GM23248 (cell line): ENCODE measurements at regions of chr16 and their contacts with region 1.

Region 1: GRCh38 chr16:18983565-18984424 is at the start of gene TMC7:
- DNase-seq: peak; percentile 93
- H3K4me3 ChIP-seq: peak within 1 kb of the TSS; percentile 77
- H3K27ac ChIP-seq: no peak within 1 kb of the TSS
- H3K4me1 ChIP-seq: peaks cover 5% of the 10 kb centered on the region; the same call in 1 of the 2 replicates
- H3K27me3 ChIP-seq: no peaks in the 10 kb centered on the region
- total RNA-seq, gene TMC7: 0.25 and 0.54 TPM in 2 replicates

Region 2: DNA sequence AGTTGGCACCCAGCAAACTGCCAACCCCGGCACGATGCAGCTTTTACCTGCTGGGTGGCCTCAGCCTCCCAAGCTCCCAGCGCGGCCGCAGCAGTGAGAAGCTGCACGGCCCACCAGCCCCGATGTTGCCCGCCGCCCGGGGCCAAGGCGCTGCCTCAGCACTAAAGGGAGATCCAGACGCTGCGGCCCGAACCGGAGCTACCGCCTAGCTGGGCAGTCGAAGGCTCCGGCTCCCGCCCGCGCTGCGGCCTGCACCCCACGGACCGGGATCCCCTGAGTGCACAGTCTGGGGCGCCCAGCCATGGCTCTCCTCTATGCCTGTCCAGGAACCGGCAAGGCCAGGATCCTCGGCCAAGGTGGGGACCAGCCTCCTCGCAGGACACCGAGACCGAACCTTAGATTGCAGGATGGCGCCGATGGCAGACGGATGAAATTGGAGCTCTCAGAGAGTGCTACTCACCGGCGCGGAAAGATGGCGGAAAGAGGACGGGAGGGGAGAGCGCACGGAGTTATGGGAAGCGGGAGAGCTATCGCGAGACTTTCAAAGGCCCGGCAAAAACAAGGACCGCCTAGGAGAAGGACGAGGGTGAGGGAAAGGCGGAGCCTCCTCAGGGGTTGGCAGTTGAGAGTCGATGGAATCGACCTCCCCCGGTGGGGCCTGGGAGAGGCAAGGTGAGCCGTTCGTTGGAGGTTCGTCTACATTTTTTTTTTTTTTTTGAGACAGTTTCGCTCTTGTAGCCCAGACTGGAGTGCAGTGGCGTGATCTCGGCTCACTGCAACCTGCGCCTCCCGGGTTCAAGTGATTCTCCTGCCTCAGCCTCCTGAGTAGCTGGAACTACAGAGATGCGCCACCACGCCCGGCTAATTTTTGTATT is 193.7 kb before region 1 on chr16 and contains the start of gene RPS15A:
- in situ Hi-C with region 1: no loop called
- DNase-seq: peak; percentile 98
- H3K4me3 ChIP-seq: peak within 1 kb of the TSS; percentile 86
- H3K27ac ChIP-seq: peak within 1 kb of the TSS; percentile 69
- H3K4me1 ChIP-seq: peaks cover 27% of the 10 kb centered on the region
- H3K27me3 ChIP-seq: no peaks in the 10 kb centered on the region
- total RNA-seq, gene RPS15A: 1,662 and 1,721 TPM in 2 replicates

Region 3: DNA sequence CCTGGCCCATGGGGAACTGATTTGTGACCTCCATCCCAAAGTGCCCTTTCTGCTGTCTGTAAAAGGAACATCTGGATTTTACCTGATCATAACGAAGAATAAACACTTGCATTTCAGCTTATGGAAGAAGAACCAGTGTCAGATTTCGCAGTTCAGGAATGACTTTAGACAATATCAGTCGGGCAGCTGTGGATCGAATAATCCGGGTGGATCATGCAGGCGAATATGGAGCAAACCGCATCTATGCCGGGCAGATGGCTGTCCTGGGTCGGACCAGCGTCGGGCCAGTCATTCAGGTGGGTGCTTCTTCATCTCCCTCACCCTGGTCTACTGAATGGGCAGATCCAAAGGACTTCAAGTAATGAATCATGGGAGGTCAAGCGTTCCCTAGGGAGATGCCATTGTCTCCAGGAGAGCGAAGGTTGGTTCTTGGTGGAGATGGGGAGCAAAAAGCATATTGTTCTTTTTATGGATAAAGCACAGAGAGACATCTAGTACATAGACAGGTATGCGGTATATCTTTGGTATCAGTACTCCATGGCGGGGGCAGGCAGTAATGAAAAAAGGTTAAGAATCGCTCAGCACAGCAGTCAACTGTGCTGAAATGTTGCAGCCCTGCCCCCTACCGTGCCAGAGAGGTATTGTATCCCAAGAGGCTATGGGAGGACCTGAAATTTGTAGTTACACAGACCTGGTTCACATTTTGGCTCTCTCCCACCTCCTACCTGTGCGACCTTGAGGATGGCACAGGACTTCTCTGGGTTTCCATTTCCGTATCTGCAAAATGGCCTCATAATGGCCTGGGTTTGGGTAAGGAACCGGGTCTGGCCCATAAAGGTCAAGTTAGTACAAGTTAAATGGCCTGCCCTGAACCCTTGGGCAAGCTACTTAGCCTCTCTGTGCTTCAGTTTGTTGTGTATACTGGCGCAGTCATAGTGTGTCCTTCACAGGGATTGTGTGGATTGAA is 88.3 kb after region 1 on chr16:
- in situ Hi-C with region 1: loop called (anchors 5 kb)
- DNase-seq: peak; percentile 72
- H3K4me3 ChIP-seq: no peak overlapping the region
- H3K27ac ChIP-seq: no peak overlapping the region
- H3K4me1 ChIP-seq: peaks cover 9% of the 10 kb centered on the region; the same call in 1 of the 2 replicates
- H3K27me3 ChIP-seq: no peaks in the 10 kb centered on the region